ENCODE measurements at regions of chr10 and their contacts with region 1.

Region 1: GRCh38 chr10:58177362-58177947 is 90.2 kb downstream of the IPMK start:
- DNase-seq: no peak
- H3K4me3 ChIP-seq: no peak overlapping the region
- H3K27ac ChIP-seq: no peak overlapping the region
- H3K4me1 ChIP-seq: peaks cover 18% of the 10 kb centered on the region
- H3K27me3 ChIP-seq: peaks cover 2% of the 10 kb centered on the region
- CTCF ChIP-seq: peak; percentile 55 to 60

Region 2: DNA sequence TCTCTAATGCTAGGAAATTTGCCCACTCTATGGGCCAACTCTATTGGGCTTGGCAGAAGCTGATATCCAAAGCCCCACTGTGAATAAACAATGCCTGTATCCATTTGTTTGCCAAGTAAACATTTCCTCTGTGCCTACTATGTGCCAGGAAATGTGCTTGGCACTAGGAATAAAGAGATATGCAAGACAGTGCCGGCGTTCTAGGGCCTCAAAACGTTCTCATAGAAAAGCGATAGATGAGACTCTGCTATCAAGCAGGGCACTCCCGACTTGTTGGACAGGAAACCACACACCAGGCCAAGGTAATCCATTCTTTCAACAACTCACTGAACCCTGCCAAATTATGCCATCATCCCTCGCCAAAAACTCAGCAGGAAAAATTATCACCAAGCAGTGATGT is 106.5 kb before region 1 on chr10:
- CTCF ChIA-PET with region 1: no interaction called
- dilution Hi-C with region 1: no loop called
- in situ Hi-C with region 1: no loop called
- intact Hi-C with region 1: no loop called
- DNase-seq: no peak
- H3K4me3 ChIP-seq: no peak overlapping the region
- H3K27ac ChIP-seq: no peak overlapping the region
- H3K4me1 ChIP-seq: no peaks in the 10 kb centered on the region
- H3K27me3 ChIP-seq: no peaks in the 10 kb centered on the region
- CTCF ChIP-seq: no peak

Region 3: DNA sequence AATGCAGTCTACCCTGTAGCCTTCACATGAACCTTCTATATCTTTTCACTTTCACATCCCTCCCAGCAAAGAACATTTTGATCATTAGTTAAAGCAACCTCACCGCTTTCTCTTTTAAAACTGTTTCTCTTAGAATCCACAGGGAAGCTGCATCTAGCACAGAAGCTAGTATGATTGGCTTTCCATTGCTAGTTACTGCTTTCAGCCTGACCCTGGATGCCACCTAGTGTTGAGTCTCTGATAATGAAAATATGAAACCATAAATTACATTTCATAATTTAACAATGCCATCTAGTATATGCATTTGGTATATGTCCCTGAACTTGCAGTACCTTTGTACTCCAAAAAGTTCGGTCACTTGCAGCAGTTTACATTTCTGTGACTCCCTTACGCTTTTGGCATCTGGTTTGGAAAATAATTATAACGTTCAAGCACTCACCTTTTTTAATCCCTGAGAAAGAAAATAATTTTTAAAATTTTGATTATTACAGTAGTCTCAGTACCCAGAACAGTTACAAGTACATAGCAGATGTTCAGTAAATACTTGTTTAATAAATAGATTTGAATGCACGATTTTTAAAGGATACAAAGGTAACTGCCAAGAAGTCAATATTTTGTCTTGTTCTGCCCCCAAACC is 114.2 kb after region 1 on chr10:
- CTCF ChIA-PET with region 1: interaction called, 10 read pairs
- dilution Hi-C with region 1: no loop called
- in situ Hi-C with region 1: loop called (anchors 5 to 10 kb)
- intact Hi-C with region 1: loop called (anchors 1 kb)
- DNase-seq: peak; percentile 42
- H3K4me3 ChIP-seq: no peak overlapping the region
- H3K27ac ChIP-seq: no peak overlapping the region
- H3K4me1 ChIP-seq: no peaks in the 10 kb centered on the region
- H3K27me3 ChIP-seq: no peaks in the 10 kb centered on the region
- CTCF ChIP-seq: peak; percentile 65 to 81

Region 4: DNA sequence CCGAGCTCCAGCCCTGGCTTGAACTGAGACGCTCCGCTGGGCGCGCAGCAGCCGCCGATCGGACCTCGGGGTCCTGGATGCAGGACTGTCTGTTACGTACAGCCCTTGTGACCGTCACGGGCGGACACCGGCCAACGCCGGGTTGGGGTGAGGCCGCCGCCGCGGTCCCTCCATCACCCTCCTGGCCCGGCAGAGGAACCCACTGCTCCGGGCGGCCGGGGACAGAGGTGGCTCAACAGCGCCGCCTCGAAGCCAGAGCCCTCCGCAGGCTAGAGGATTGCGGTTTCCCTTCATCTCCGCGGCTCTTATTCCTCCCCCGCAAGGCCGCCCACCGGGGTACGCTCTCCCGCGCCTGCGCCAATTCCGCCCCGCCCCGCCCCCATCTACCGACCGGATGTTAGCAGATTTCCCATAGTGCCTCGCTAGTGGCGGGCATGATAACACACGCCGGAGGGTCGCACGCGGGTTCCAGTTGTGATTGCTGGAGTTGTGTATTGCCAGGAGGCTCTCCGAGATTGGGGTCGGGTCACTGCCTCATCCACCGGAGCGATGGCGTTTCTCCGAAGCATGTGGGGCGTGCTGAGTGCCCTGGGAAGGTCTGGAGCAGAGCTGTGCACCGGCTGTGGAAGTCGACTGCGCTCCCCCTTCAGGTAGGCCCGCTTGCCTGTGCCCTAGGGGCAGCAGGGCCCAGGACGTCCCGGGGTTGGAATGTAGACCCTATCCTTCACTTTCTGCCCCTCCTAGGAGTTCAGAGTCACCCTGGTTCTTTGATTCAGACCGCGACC is 207.7 kb after region 1 on chr10 and contains the start of gene TFAM:
- CTCF ChIA-PET with region 1: no interaction called
- dilution Hi-C with region 1: no loop called
- in situ Hi-C with region 1: no loop called
- intact Hi-C with region 1: loop called (anchors 1 kb)
- DNase-seq: peak; percentile 91
- H3K4me3 ChIP-seq: peak within 1 kb of the TSS; percentile 73 to 94 (median 76)
- H3K27ac ChIP-seq: peak within 1 kb of the TSS; percentile 63
- H3K4me1 ChIP-seq: peaks cover 16% of the 10 kb centered on the region
- H3K27me3 ChIP-seq: no peaks in the 10 kb centered on the region
- CTCF ChIP-seq: peak; percentile 29 to 72
- total RNA-seq, gene TFAM: 26.2 to 46.3 TPM